Activated naive CD4-positive, alpha-beta T cell treated with anti-CD3 and anti-CD28 coated beads for 36 hours (primary cell): ENCODE measurements at regions of chr11 and their contacts with region 1.

Region 1: GRCh38 chr11:108222686-108223448 is at the start of gene ATM:
- DNase-seq: peak; percentile 99
- H3K4me3 Mint-ChIP-seq: no peak within 1 kb of the TSS
- H3K27ac Mint-ChIP-seq: no peak within 1 kb of the TSS
- H3K4me1 Mint-ChIP-seq: peaks cover 34% of the 10 kb centered on the region
- H3K27me3 Mint-ChIP-seq: no peaks in the 10 kb centered on the region
- total RNA-seq, gene ATM: 29.5 to 30.6 TPM

Region 2: GRCh38 chr11:107590460-107591377 is 632.1 kb before region 1 on chr11 and contains the start of gene ELMOD1:
- CTCF ChIA-PET with region 1: no interaction called
- intact Hi-C with region 1: no loop called
- DNase-seq: peak; percentile 57
- H3K4me3 Mint-ChIP-seq: peak within 1 kb of the TSS; percentile 77
- H3K27ac Mint-ChIP-seq: no peak within 1 kb of the TSS
- H3K4me1 Mint-ChIP-seq: peaks cover 22% of the 10 kb centered on the region
- H3K27me3 Mint-ChIP-seq: peaks cover 71% of the 10 kb centered on the region
- total RNA-seq, gene ELMOD1: not detected

Region 3: GRCh38 chr11:107840129-107840484 is 382.8 kb before region 1 on chr11:
- CTCF ChIA-PET with region 1: no interaction called
- intact Hi-C with region 1: loop called (anchors 1 kb)
- DNase-seq: no peak
- H3K4me3 Mint-ChIP-seq: no peak overlapping the region
- H3K27ac Mint-ChIP-seq: peak overlapping the region; percentile 93
- H3K4me1 Mint-ChIP-seq: peaks cover 68% of the 10 kb centered on the region
- H3K27me3 Mint-ChIP-seq: no peaks in the 10 kb centered on the region

Region 4: GRCh38 chr11:107988397-107989158 is 234.3 kb before region 1 on chr11:
- CTCF ChIA-PET with region 1: no interaction called
- intact Hi-C with region 1: no loop called
- DNase-seq: no peak
- H3K4me3 Mint-ChIP-seq: no peak overlapping the region
- H3K27ac Mint-ChIP-seq: no peak overlapping the region
- H3K4me1 Mint-ChIP-seq: no peaks in the 10 kb centered on the region
- H3K27me3 Mint-ChIP-seq: peaks cover 4% of the 10 kb centered on the region

Region 5: GRCh38 chr11:108135845-108136544 is 86.9 kb before region 1 on chr11:
- CTCF ChIA-PET with region 1: interaction called, 3 read pairs
- intact Hi-C with region 1: loop called (anchors 1 kb)
- DNase-seq: peak; percentile 68
- H3K4me3 Mint-ChIP-seq: no peak overlapping the region
- H3K27ac Mint-ChIP-seq: peak overlapping the region; percentile 74
- H3K4me1 Mint-ChIP-seq: peaks cover 25% of the 10 kb centered on the region
- H3K27me3 Mint-ChIP-seq: no peaks in the 10 kb centered on the region

Region 6: GRCh38 chr11:108160970-108161566 is 61.8 kb before region 1 on chr11:
- CTCF ChIA-PET with region 1: no interaction called
- intact Hi-C with region 1: no loop called
- DNase-seq: no peak
- H3K4me3 Mint-ChIP-seq: no peak overlapping the region
- H3K27ac Mint-ChIP-seq: peak overlapping the region; percentile 65
- H3K4me1 Mint-ChIP-seq: peaks cover 14% of the 10 kb centered on the region
- H3K27me3 Mint-ChIP-seq: no peaks in the 10 kb centered on the region

Region 7: DNA sequence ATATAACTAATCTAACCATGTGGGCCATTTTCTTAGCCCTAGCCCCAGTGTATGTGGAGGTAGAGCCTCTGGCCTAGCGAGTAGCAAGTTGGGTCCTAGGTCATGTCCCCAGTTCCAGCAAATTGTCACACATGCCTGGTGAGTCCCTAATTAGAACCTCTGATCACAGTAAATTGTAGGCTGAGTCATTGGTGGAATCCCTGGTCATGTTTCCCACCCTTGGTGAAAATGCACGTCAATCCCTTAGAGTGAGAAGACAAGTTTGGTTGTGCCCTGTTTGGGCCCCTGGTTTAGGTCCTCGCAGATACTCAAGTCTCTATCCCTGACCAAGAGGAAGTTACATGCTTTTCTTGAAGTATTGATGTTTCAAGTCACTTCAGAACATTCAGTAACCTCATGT is 46.7 kb after region 1 on chr11:
- CTCF ChIA-PET with region 1: interaction called, 3 read pairs
- intact Hi-C with region 1: loop called (anchors 1 kb)
- DNase-seq: peak; percentile 49
- H3K4me3 Mint-ChIP-seq: no peak overlapping the region
- H3K27ac Mint-ChIP-seq: peak overlapping the region; percentile 82
- H3K4me1 Mint-ChIP-seq: peaks cover 41% of the 10 kb centered on the region
- H3K27me3 Mint-ChIP-seq: no peaks in the 10 kb centered on the region

Region 8: DNA sequence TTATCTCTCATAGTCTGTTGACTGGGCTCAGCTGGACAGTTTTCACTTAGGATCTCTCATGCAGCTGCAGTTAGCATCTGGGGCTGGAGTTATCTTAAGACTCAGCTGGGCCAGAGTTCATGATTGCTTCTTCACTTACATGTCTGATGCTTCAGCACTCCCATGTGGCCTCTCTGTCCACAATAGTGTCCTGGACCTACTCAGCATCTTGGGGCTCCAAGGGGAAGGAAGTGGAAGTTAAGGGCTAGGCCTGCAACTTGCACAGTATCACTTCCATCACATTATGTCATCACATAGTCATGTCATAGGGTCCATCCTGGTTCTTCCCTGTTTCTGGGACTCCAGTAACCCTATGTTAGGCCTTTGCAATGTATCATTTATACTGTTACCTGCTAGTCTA is 128.6 kb after region 1 on chr11:
- CTCF ChIA-PET with region 1: no interaction called
- intact Hi-C with region 1: loop called (anchors 1 kb)
- DNase-seq: peak; percentile 30
- H3K4me3 Mint-ChIP-seq: no peak overlapping the region
- H3K27ac Mint-ChIP-seq: no peak overlapping the region
- H3K4me1 Mint-ChIP-seq: peaks cover under 1% of the 10 kb centered on the region
- H3K27me3 Mint-ChIP-seq: no peaks in the 10 kb centered on the region

Region 9: GRCh38 chr11:108620958-108621772 is 398.3 kb after region 1 on chr11:
- CTCF ChIA-PET with region 1: no interaction called
- intact Hi-C with region 1: loop called (anchors 1 kb)
- DNase-seq: no peak
- H3K4me3 Mint-ChIP-seq: no peak overlapping the region
- H3K27ac Mint-ChIP-seq: no peak overlapping the region
- H3K4me1 Mint-ChIP-seq: peaks cover 24% of the 10 kb centered on the region
- H3K27me3 Mint-ChIP-seq: peaks cover 10% of the 10 kb centered on the region